ENCODE measurements at regions of chr1 and their contacts with region 1.

Region 1: GRCh38 chr1:109984456-109985275 is at the start of gene AHCYL1:
- DNase-seq: peak; percentile 99
- ATAC-seq: peak; percentile 100
- H3K4me3 ChIP-seq: peak within 1 kb of the TSS; percentile 59 to 88 (median 82)
- H3K4me3 Mint-ChIP-seq: peak within 1 kb of the TSS; percentile 99
- H3K27ac ChIP-seq: peak within 1 kb of the TSS; percentile 72 to 92
- H3K27ac Mint-ChIP-seq: peak within 1 kb of the TSS; percentile 98
- H3K4me1 ChIP-seq: peaks cover 22 to 23% of the 10 kb centered on the region in 2 donors
- H3K4me1 Mint-ChIP-seq: peaks cover 47% of the 10 kb centered on the region
- H3K27me3 ChIP-seq: no peaks in the 10 kb centered on the region
- H3K27me3 Mint-ChIP-seq: no peaks in the 10 kb centered on the region
- CTCF ChIP-seq: peak; percentile 93
- total RNA-seq, gene AHCYL1: 51.4 and 58.7 TPM in 2 replicates

Region 2: DNA sequence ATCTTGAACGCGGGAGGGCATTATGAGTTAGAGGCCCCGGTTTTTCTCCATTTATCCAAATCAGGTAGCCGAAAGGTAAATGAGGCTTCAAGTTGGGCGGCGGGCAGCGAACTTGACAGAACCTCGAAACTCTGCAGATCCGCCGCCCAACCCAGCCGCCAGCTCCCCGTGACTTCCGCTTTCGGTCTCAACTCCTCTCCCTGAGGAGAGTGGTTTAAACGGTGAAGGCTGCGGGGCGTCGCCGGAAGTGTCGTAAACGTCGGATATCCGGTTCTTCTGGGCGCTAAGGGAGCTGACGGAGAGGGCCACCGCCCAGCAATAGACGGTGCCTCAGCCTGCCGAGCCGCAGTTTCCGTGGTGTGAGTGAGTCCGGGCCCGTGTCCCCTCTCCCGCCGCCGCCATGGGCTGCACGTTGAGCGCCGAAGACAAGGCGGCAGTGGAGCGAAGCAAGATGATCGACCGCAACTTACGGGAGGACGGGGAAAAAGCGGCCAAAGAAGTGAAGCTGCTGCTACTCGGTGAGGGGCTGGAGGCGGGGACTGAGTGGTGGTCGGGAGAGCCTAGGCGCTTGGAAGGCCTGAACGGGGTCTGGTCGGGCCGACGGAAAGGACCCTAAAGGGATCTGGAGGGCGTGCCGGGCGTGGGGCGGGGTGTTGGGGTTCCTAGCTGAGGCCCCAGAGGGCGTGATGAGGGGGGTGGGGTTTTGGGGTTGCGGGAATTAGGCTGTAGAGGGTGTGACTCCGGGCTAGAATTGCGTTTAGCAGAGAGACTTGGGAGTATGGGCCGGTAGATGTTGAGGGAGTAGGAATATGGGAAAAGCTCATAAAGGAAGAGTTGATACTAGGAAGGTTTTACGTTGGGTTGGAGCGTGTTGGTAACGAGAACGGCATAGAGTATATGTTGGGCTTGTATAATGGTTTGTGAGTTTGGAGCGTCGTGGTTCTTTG is 436.1 kb before region 1 on chr1 and contains the start of gene GNAI3:
- CTCF ChIA-PET with region 1: interaction called, 34 read pairs
- POLR2A ChIA-PET with region 1: interaction called, 4 read pairs
- intact Hi-C with region 1: loop called (anchors 1 kb)
- DNase-seq: peak; percentile 97
- ATAC-seq: peak; percentile 87
- H3K4me3 ChIP-seq: peak within 1 kb of the TSS; percentile 84 to 95 (median 92)
- H3K4me3 Mint-ChIP-seq: peak within 1 kb of the TSS; percentile 99
- H3K27ac ChIP-seq: peak within 1 kb of the TSS; percentile 93 to 96
- H3K27ac Mint-ChIP-seq: peak within 1 kb of the TSS; percentile 99
- H3K4me1 ChIP-seq: peaks cover 25 to 33% of the 10 kb centered on the region in 2 donors
- H3K4me1 Mint-ChIP-seq: peaks cover 55% of the 10 kb centered on the region
- H3K27me3 ChIP-seq: no peaks in the 10 kb centered on the region
- H3K27me3 Mint-ChIP-seq: no peaks in the 10 kb centered on the region
- CTCF ChIP-seq: no peak
- total RNA-seq, gene GNAI3: 8.5 and 8.8 TPM in 2 replicates

Region 3: GRCh38 chr1:109649491-109649914 is 335.2 kb before region 1 on chr1:
- CTCF ChIA-PET with region 1: interaction called, 18 read pairs
- POLR2A ChIA-PET with region 1: no interaction called
- intact Hi-C with region 1: no loop called
- DNase-seq: no peak
- ATAC-seq: no peak
- H3K4me3 ChIP-seq: no peak overlapping the region
- H3K4me3 Mint-ChIP-seq: no peak overlapping the region
- H3K27ac ChIP-seq: no peak overlapping the region
- H3K27ac Mint-ChIP-seq: no peak overlapping the region
- H3K4me1 ChIP-seq: no peaks in the 10 kb centered on the region
- H3K4me1 Mint-ChIP-seq: peaks cover 3% of the 10 kb centered on the region
- H3K27me3 ChIP-seq: peaks cover 0 to 9% (median 3%) of the 10 kb centered on the region in 4 experiments
- H3K27me3 Mint-ChIP-seq: peaks cover 29% of the 10 kb centered on the region
- CTCF ChIP-seq: no peak

Region 4: GRCh38 chr1:109773146-109773899 is 211.3 kb before region 1 on chr1:
- CTCF ChIA-PET with region 1: interaction called, 667 read pairs
- POLR2A ChIA-PET with region 1: interaction called, 12 read pairs
- intact Hi-C with region 1: no loop called
- DNase-seq: peak; percentile 79
- ATAC-seq: peak; percentile 81
- H3K4me3 ChIP-seq: no peak overlapping the region
- H3K4me3 Mint-ChIP-seq: no peak overlapping the region
- H3K27ac ChIP-seq: no peak overlapping the region
- H3K27ac Mint-ChIP-seq: no peak overlapping the region
- H3K4me1 ChIP-seq: peaks cover 0 to 11% of the 10 kb centered on the region in 2 donors
- H3K4me1 Mint-ChIP-seq: no peaks in the 10 kb centered on the region
- H3K27me3 ChIP-seq: peaks cover 0 to 8% (median 0%) of the 10 kb centered on the region in 4 experiments
- H3K27me3 Mint-ChIP-seq: peaks cover 7% of the 10 kb centered on the region
- CTCF ChIP-seq: peak; percentile 63

Region 5: DNA sequence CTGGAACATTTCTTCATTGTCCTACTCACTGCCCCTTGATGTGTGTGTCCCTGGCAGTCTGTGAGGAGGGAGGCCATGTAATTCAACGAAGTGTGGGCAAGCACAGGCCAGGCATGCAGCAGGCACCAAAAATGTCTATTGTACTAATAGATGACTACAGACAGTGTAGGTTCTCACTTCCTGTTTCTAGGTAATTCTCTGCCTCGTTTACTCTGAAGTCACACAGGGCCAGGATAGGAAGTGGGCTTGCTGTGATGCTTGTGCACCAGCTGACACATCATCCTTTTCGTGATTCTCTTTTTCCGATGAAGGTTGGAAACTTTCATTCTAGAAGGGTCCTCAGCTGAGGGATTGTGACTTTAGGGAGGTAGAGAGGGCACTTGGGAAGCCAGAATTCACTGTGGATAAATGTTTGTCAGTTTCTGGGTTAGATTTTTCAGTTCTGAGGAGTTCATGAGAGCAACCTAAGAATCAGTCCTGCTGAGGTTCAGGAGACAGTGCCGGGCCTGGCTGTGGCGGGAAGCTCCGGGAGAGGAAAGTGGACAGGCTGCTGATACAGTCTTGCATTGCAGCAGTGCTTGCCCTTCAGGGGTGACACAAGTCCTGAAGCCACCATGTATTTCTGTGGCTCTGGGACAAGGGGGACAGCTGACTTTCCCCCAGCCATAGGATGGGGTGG is 78.4 kb before region 1 on chr1:
- CTCF ChIA-PET with region 1: interaction called, 3 read pairs
- POLR2A ChIA-PET with region 1: no interaction called
- intact Hi-C with region 1: loop called (anchors 1 kb)
- DNase-seq: peak; percentile 84
- ATAC-seq: peak; percentile 89
- H3K4me3 ChIP-seq: peak overlapping the region in 2 of 5 experiments; percentile 17 to 19
- H3K4me3 Mint-ChIP-seq: peak overlapping the region; percentile 74
- H3K27ac ChIP-seq: no peak overlapping the region
- H3K27ac Mint-ChIP-seq: peak overlapping the region; percentile 88
- H3K4me1 ChIP-seq: peaks cover 27 to 34% of the 10 kb centered on the region in 2 donors
- H3K4me1 Mint-ChIP-seq: peaks cover 45% of the 10 kb centered on the region
- H3K27me3 ChIP-seq: peaks cover 0 to 69% (median 42%) of the 10 kb centered on the region in 4 experiments
- H3K27me3 Mint-ChIP-seq: peaks cover 60% of the 10 kb centered on the region
- CTCF ChIP-seq: no peak